ENCODE measurements at regions of chr1 and their contacts with region 1.

Region 1: GRCh38 chr1:30511991-30512913 is 211.1 kb downstream of the MATN1 start:
- DNase-seq: no peak
- H3K4me3 ChIP-seq: no peak overlapping the region
- CTCF ChIP-seq: no peak

Region 2: GRCh38 chr1:30492451-30492850 is 19.8 kb before region 1 on chr1:
- CTCF ChIA-PET with region 1: no interaction called
- POLR2A ChIA-PET with region 1: no interaction called
- DNase-seq: no peak
- H3K4me3 ChIP-seq: no peak overlapping the region
- CTCF ChIP-seq: no peak

Region 3: DNA sequence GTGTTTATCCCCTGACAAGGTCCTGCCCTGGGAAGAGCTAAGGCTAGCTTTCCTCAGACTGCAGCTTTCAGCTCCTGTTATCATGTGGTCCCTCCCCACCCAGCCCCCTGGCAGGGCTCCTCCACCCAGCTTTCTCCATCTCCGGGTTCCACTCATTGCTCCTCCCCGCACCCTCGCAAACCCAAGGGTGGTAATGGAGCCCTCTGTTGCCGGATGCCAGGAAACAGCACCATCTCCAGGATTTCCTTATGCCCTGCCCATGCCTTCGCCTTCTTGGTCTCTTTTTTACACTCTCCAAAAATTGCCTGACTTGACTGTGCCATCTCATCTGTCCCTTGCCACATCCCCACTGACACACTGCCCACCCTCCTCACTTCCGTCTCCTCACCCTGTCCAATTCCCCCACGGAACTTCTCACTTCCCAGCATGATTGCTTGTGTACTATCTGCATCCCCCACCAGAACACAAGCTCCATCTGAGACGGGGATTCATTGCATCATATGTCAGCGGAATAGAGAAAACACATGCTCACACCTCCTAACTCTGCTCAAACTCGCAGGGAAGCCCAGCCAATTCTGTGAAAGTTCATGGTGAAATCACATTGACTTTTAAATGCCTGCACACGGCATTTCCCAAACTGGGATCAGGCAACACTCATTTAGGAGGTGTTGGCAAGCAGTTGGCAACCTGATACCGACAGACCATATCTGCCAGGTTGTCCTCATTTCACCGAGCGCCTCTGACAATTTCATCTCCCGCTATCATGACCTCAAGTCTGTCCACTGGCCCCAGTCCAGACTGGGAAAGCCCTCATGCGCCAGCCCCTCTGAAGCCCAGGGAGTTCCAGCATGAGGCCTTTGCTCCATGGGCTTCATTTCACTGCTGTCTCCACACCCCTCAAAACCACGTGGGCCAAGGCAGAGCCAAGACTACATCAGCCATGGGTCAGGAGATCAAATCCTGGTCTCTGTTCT is 10.1 kb after region 1 on chr1:
- CTCF ChIA-PET with region 1: no interaction called
- POLR2A ChIA-PET with region 1: interaction called, 15 read pairs
- DNase-seq: no peak
- H3K4me3 ChIP-seq: no peak overlapping the region
- CTCF ChIP-seq: no peak

Measured in AG04449 (cell line).